ENCODE measurements at regions of chr3 and their contacts with region 1.

Region 1: DNA sequence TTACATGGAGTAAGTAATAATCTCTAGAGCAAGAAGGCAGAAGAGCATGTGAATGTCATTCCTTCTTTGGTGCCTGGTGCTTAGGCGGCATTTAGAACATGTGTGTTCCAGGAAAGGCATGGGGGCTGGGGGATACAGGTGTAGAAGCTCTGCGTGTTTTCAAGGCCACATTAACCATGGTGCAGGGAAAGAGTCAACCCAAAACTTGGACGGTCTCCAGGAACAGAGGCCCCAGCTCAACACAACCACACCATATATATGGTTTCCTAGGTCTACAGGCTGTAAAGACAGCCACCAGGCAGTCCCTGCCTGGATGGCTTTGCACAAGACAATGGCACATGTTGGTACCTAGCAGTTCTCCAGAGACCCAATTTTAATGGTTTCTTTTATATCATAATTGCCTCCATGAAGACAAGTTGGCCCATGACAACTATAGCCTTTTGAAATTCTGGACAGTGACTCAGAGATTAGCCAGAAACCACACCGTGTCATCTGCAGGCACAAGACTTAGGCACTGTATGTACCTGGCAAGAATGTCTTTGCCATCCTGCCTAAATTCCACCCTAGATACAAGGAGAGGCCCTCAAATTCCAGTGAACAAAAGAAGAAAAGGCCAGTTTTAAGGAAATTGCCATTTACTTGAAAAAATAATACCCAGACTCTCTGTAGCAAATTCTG is 25.0 kb upstream of the DGKG start:
- DNase-seq: no peak
- ATAC-seq: no peak
- H3K4me3 ChIP-seq: no peak overlapping the region
- H3K4me3 Mint-ChIP-seq: no peak overlapping the region
- H3K27ac ChIP-seq: no peak overlapping the region
- H3K27ac Mint-ChIP-seq: no peak overlapping the region
- H3K4me1 ChIP-seq: no peaks in the 10 kb centered on the region
- H3K4me1 Mint-ChIP-seq: no peaks in the 10 kb centered on the region
- H3K27me3 ChIP-seq: peaks cover 0 to 6% of the 10 kb centered on the region in 2 experiments
- H3K27me3 Mint-ChIP-seq: peaks cover 1 to 7% of the 10 kb centered on the region in 2 donors

Region 2: DNA sequence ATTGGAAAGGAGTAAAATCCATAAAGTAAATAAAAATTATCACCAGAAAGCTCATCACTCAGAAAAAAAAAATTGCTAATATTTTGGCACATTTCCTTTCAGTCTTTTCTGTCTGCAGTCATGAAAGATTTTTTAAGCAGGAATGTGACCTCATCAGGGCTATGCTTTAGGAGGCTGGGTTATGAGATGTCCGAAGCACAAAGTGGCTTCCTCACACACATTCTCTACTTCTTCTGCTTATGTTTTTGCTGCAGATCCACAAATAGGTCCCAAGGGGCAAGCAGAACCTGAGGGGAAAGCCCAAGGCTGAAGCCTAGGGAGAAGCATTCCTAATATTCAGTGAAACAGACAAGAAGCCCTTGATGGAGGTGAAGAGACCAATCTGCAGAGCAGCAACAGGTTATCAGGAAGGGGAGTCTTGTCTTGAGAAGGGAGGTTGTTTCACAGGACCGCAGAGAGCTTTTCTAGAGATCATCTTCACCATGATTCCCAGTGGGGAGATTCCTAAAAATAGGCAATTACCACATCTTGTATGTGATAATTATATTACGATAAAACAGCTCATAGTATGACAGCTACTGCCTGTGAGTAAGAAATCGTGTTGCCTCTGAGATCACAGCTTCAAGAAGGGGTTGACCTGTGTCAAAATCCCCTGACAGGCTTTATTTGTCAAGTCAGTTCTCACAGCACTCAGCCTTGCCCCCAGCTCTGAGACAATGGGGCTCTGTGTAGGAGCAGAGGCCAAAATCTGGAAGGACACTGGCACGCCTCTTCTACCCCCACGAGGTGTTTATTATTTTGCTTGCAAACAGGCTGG is 622.7 kb before region 1 on chr3:
- CTCF ChIA-PET with region 1: no interaction called
- POLR2A ChIA-PET with region 1: no interaction called
- DNase-seq: no peak
- ATAC-seq: no peak
- H3K4me3 ChIP-seq: no peak overlapping the region
- H3K4me3 Mint-ChIP-seq: no peak overlapping the region
- H3K27ac ChIP-seq: no peak overlapping the region
- H3K27ac Mint-ChIP-seq: no peak overlapping the region
- H3K4me1 ChIP-seq: peaks cover 0 to 9% of the 10 kb centered on the region in 2 experiments
- H3K4me1 Mint-ChIP-seq: peaks cover 0 to 6% (median 2%) of the 10 kb centered on the region in 3 donors
- H3K27me3 ChIP-seq: peaks cover 0 to 16% of the 10 kb centered on the region in 2 experiments
- H3K27me3 Mint-ChIP-seq: peaks cover 25 to 35% of the 10 kb centered on the region in 2 donors

Region 3: DNA sequence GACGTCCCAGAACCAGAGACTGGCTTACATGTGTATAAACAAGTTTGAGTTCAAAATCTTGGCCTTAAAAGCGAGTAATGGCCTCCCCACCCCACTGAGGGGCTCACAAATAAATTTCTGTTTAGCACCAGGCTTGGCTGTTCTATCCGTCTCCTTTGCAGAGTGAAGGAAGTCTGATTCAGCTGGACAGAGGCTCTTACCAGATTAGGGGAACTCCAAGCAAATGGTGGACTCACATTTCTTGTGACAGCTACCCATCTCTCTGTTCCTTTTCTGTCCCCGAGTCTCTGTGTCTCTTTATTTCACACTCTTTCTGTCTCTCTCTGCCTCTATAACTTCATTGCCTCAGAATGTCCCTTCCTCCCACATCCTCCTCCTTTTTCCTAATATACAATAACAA is 87.7 kb before region 1 on chr3:
- CTCF ChIA-PET with region 1: interaction called in 1 of 2 experiments, 3 read pairs
- POLR2A ChIA-PET with region 1: interaction called in 1 of 2 experiments, 10 read pairs
- DNase-seq: no peak
- ATAC-seq: no peak
- H3K4me3 ChIP-seq: no peak overlapping the region
- H3K4me3 Mint-ChIP-seq: no peak overlapping the region
- H3K27ac ChIP-seq: no peak overlapping the region
- H3K27ac Mint-ChIP-seq: no peak overlapping the region
- H3K4me1 ChIP-seq: no peaks in the 10 kb centered on the region
- H3K4me1 Mint-ChIP-seq: no peaks in the 10 kb centered on the region
- H3K27me3 ChIP-seq: peaks cover 0 to 13% of the 10 kb centered on the region in 2 experiments
- H3K27me3 Mint-ChIP-seq: peaks cover 3 to 4% of the 10 kb centered on the region in 2 donors

Region 4: DNA sequence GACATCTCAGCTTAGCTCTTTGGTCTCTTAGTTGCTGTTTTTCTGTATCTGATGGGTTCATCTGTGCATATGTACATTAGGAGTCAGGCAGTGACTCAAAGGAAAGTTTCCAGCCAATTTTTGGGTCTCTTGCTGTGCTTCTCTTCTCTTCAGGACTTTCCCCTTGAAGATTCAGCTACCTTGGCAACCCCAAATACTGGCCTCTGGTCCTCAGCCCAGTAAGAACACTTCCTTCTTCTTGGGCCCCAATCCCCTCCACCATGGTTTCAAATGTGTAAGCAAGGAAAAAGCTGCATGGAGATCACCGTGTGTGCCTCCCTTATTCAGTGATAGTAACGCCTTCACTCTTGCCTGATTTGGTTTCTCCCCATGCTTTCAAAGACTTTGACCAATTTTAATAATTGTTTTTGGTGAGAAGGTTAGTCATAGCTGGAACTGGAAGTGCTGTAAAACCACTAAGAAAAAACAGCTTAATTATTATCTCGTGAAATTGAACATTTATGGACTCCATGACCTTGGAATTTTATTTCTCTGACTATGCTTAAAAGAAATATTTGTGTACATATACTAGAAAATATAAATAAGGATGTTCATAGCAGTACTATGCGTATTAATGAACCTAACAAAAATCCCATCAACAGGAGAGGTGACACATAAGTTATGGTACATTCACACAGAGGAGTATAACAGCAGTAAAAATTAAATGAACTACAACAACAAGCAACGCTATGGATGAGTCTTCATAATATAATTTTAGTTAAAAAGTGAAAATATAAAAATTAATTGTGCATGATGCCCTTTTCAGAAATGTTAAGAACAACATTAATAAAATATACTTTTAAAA is 1483.6 kb after region 1 on chr3:
- CTCF ChIA-PET with region 1: no interaction called
- POLR2A ChIA-PET with region 1: no interaction called
- DNase-seq: no peak
- ATAC-seq: no peak
- H3K4me3 ChIP-seq: no peak overlapping the region
- H3K4me3 Mint-ChIP-seq: no peak overlapping the region
- H3K27ac ChIP-seq: no peak overlapping the region
- H3K27ac Mint-ChIP-seq: no peak overlapping the region
- H3K4me1 ChIP-seq: no peaks in the 10 kb centered on the region
- H3K4me1 Mint-ChIP-seq: no peaks in the 10 kb centered on the region
- H3K27me3 ChIP-seq: no peaks in the 10 kb centered on the region
- H3K27me3 Mint-ChIP-seq: no peaks in the 10 kb centered on the region

Measured in T-cell (primary cell).